ENCODE measurements at regions of chr7 and their contacts with region 1.

Region 1: GRCh38 chr7:22559829-22560489 is 60.0 kb upstream of the STEAP1B start:
- DNase-seq: peak in 8 of 10 donors; percentile 18 to 83 (median 60)
- H3K4me3 ChIP-seq: no peak overlapping the region
- H3K27ac ChIP-seq: no peak overlapping the region
- H3K27me3 ChIP-seq: no peaks in the 10 kb centered on the region
- CTCF ChIP-seq: peak; percentile 69 to 99 (median 90)

Region 2: DNA sequence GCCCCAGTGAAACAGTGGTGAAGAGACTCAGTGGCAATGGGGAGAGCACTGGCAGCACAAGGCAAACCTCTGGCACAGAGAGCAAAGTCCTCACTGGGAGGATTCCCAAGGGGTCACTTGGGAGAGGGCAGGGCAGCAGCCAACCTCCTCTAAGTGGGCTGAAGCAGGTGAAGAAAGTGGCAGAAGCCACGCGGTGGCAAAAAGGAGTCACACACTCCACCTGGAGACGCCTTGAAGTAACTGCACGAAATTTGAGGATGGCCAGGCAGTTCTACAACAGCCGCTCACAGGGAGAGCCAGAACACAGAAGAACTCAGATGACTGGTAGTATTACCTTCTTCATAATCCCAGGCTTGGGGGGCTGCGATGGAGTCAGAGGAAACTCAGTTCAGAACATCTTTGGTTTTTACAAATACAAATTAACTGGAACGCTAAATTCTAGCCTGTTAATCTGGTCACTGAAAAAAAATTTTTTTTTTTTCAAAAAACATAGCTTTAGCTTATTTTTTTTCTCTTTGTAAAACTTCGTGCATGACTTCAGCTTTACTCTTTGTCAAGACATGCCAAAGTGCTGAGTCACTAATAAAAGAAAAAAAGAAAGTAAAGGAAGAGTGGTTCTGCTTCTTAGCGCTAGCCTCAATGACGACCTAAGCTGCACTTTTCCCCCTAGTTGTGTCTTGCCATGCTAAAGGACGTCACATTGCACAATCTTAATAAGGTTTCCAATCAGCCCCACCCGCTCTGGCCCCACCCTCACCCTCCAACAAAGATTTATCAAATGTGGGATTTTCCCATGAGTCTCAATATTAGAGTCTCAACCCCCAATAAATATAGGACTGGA is 166.6 kb after region 1 on chr7:
- intact Hi-C with region 1: loop called (anchors 2 to 5 kb)
- DNase-seq: peak in 1 of 10 donors; percentile 41
- H3K4me3 ChIP-seq: peak overlapping the region in 55 of 59 donors; percentile 8 to 64 (median 38)
- H3K27ac ChIP-seq: peak overlapping the region in 26 of 59 donors; percentile 5 to 71 (median 37)
- H3K27me3 ChIP-seq: peaks cover 0 to 7% (median 0%) of the 10 kb centered on the region in 45 donors
- CTCF ChIP-seq: peak in 52 of 56 donors; percentile 4 to 63 (median 46)

Region 3: GRCh38 chr7:22782616-22783232 is 222.8 kb after region 1 on chr7:
- intact Hi-C with region 1: loop called in 1 of 2 experiments (anchors 5 kb)
- DNase-seq: peak in 3 of 10 donors; percentile 7 to 35 (median 18)
- H3K4me3 ChIP-seq: no peak overlapping the region
- H3K27ac ChIP-seq: no peak overlapping the region
- H3K27me3 ChIP-seq: no peaks in the 10 kb centered on the region
- CTCF ChIP-seq: peak; percentile 14 to 74 (median 56)

Region 4: DNA sequence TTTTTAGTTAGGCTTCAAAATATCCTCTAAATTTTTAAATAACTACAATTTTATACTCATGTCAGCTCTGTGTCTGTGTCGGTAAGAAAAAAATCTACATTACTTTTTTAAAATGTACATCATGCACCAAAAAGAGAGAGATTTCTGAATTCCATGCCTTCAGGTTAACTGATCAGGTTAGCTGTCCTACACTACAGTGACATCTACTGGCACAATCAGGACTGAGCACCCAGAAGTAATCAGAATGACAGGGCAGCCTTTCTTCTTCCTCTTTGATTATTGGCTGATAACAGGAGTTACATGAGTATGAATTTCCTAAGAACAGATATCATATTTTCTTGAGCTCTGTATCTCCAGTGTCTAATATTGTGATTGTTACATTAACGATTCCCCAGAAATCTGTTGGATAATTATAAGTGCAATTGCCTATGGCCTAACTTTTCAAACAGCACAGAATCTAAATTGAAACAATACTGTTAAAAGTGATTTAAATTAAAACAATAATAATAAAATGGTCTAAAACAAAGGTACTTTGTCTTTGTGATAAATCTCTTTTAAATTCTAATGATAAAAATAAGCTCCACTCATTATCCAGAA is 495.7 kb after region 1 on chr7:
- intact Hi-C with region 1: loop called (anchors 5 kb)
- DNase-seq: peak in 4 of 10 donors; percentile 19 to 60 (median 30)
- H3K4me3 ChIP-seq: no peak overlapping the region
- H3K27ac ChIP-seq: no peak overlapping the region
- H3K27me3 ChIP-seq: peaks cover 0 to 3% (median 0%) of the 10 kb centered on the region in 45 donors
- CTCF ChIP-seq: peak; percentile 72 to 98 (median 89)

Region 5: DNA sequence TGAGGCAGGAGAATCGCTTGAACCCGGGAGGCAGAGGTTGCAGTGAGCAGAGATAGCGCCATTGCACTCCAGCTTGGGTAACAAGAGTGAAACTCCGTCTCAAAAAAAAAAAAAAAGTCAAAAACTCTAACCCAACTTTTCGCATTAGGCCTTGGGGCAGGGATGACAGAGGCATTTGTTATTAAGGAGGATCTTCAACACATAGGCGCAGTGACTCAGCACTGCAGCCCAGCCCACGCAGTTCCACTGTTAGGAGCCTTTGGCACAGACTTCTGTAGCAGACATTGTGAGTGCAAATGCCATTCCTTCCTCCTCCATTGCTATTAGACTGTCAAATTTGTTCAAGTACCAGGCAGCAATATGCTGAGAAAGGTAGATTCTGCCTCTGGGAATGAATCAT is 502.5 kb after region 1 on chr7:
- intact Hi-C with region 1: loop called (anchors 5 kb)
- DNase-seq: no peak
- H3K4me3 ChIP-seq: no peak overlapping the region
- H3K27ac ChIP-seq: no peak overlapping the region
- H3K27me3 ChIP-seq: no peaks in the 10 kb centered on the region
- CTCF ChIP-seq: no peak

Measured in dorsolateral prefrontal cortex (tissue), 120 donors.